ENCODE measurements at regions of chr9 and their contacts with region 1.

Region 1: GRCh38 chr9:69180670-69181069 is 6.6 kb downstream of the TJP2 start:
- DNase-seq: no peak
- ATAC-seq: peak; percentile 51
- H3K4me3 ChIP-seq: no peak overlapping the region
- H3K27ac ChIP-seq: no peak overlapping the region
- H3K4me1 ChIP-seq: peaks cover 18% of the 10 kb centered on the region
- H3K27me3 ChIP-seq: no peaks in the 10 kb centered on the region
- CTCF ChIP-seq: no peak
- EP300 ChIP-seq: no peak
- POLR2A ChIP-seq: no peak
- RAD21 ChIP-seq: no peak

Region 2: DNA sequence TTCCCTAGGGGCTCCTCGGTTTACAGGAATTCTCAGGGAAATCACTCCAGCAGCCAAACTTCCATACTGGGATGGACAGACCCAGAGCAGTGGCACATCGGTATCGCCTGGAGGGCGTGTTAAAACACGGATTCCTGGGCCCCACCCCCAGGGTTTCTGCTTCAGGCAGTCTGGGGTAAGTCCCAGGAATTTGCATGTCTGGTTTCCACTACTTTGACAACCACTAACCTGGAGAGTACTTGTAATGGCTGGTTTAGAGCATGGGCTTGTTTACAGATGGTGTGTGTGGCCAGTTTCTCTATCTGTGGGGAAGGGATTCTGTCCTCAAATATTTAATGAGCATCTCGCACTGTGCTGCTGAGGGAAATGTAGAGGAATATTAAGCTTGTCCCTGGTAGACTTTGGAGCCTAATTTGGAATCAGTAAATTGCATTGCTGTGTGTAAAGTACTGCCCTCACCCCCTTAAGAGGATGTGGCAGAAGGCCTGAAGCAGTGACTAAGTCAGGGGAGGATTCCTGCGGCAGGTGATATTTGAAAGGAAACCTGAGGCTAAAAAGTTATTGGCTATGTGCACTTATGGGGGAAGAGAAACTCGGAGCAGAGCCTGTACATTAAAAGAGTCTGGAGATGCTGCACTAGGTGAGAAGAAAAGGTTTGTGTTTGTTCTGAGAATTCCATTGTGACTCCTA is 25.2 kb before region 1 on chr9:
- CTCF ChIA-PET with region 1: interaction called, 17 read pairs
- POLR2A ChIA-PET with region 1: no interaction called
- RAD21 ChIA-PET with region 1: interaction called, 8 read pairs
- SMC1A ChIA-PET with region 1: interaction called, 6 read pairs
- in situ Hi-C with region 1: no loop called
- intact Hi-C with region 1: no loop called
- DNase-seq: no peak
- ATAC-seq: peak; percentile 99
- H3K4me3 ChIP-seq: 0 out of 2 replicates have a peak overlapping the region, but pooled peaks have one; percentile 24
- H3K27ac ChIP-seq: no peak overlapping the region
- H3K4me1 ChIP-seq: peaks cover 5% of the 10 kb centered on the region; the same call in 1 of the 2 replicates
- H3K27me3 ChIP-seq: no peaks in the 10 kb centered on the region
- CTCF ChIP-seq: no peak
- EP300 ChIP-seq: peak in 1 of 2 experiments; percentile 49; a peak in 1 of 4 replicates
- POLR2A ChIP-seq: no peak
- RAD21 ChIP-seq: no peak